Activated B cell treated with CpG ODN at 0.5 μM for 24 hours (primary cell): ENCODE measurements at regions of chr4 and their contacts with region 1.

Region 1: GRCh38 chr4:161696944-161697343 is 466.9 kb downstream of the FSTL5 start:
- DNase-seq: no peak
- ATAC-seq: no peak
- H3K4me3 Mint-ChIP-seq: no peak overlapping the region
- H3K27ac Mint-ChIP-seq: no peak overlapping the region
- H3K4me1 Mint-ChIP-seq: no peaks in the 10 kb centered on the region
- H3K27me3 Mint-ChIP-seq: no peaks in the 10 kb centered on the region
- CTCF ChIP-seq: no peak

Region 2: GRCh38 chr4:161376275-161376674 is 320.7 kb before region 1 on chr4:
- CTCF ChIA-PET with region 1: no interaction called
- POLR2A ChIA-PET with region 1: interaction called, 10 read pairs
- intact Hi-C with region 1: no loop called
- DNase-seq: no peak
- ATAC-seq: no peak
- H3K4me3 Mint-ChIP-seq: no peak overlapping the region
- H3K27ac Mint-ChIP-seq: no peak overlapping the region
- H3K4me1 Mint-ChIP-seq: no peaks in the 10 kb centered on the region
- H3K27me3 Mint-ChIP-seq: no peaks in the 10 kb centered on the region
- CTCF ChIP-seq: no peak

Region 3: GRCh38 chr4:161486461-161486860 is 210.5 kb before region 1 on chr4:
- CTCF ChIA-PET with region 1: no interaction called
- POLR2A ChIA-PET with region 1: no interaction called
- intact Hi-C with region 1: no loop called
- DNase-seq: no peak
- ATAC-seq: no peak
- H3K4me3 Mint-ChIP-seq: no peak overlapping the region
- H3K27ac Mint-ChIP-seq: no peak overlapping the region
- H3K4me1 Mint-ChIP-seq: no peaks in the 10 kb centered on the region
- H3K27me3 Mint-ChIP-seq: no peaks in the 10 kb centered on the region
- CTCF ChIP-seq: no peak

Region 4: GRCh38 chr4:161841759-161842158 is 144.8 kb after region 1 on chr4:
- CTCF ChIA-PET with region 1: no interaction called
- POLR2A ChIA-PET with region 1: no interaction called
- intact Hi-C with region 1: no loop called
- DNase-seq: no peak
- ATAC-seq: no peak
- H3K4me3 Mint-ChIP-seq: no peak overlapping the region
- H3K27ac Mint-ChIP-seq: no peak overlapping the region
- H3K4me1 Mint-ChIP-seq: no peaks in the 10 kb centered on the region
- H3K27me3 Mint-ChIP-seq: no peaks in the 10 kb centered on the region
- CTCF ChIP-seq: no peak

Region 5: DNA sequence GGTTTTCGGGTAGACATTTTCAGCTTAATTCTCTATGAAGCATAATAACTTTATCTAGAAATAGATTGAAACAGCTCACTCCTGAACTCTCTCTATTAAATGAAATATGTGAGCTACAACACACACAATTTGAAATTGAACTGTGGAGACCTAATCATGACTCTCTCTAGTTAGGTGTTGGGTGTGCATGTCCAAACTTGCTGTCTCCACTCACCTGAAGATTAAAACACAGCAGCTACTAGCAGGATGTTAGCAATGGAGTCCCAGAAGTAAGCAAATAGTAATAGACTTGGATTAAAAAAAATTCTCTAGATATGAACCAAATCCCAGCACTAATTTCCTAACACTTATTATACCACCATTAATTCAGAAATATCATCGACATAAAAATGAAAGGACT is 293.8 kb after region 1 on chr4:
- CTCF ChIA-PET with region 1: no interaction called
- POLR2A ChIA-PET with region 1: no interaction called
- intact Hi-C with region 1: no loop called
- DNase-seq: no peak
- ATAC-seq: no peak
- H3K4me3 Mint-ChIP-seq: no peak overlapping the region
- H3K27ac Mint-ChIP-seq: no peak overlapping the region
- H3K4me1 Mint-ChIP-seq: no peaks in the 10 kb centered on the region
- H3K27me3 Mint-ChIP-seq: no peaks in the 10 kb centered on the region
- CTCF ChIP-seq: no peak